ENCODE measurements at regions of chr17 and their contacts with region 1.

Region 1: DNA sequence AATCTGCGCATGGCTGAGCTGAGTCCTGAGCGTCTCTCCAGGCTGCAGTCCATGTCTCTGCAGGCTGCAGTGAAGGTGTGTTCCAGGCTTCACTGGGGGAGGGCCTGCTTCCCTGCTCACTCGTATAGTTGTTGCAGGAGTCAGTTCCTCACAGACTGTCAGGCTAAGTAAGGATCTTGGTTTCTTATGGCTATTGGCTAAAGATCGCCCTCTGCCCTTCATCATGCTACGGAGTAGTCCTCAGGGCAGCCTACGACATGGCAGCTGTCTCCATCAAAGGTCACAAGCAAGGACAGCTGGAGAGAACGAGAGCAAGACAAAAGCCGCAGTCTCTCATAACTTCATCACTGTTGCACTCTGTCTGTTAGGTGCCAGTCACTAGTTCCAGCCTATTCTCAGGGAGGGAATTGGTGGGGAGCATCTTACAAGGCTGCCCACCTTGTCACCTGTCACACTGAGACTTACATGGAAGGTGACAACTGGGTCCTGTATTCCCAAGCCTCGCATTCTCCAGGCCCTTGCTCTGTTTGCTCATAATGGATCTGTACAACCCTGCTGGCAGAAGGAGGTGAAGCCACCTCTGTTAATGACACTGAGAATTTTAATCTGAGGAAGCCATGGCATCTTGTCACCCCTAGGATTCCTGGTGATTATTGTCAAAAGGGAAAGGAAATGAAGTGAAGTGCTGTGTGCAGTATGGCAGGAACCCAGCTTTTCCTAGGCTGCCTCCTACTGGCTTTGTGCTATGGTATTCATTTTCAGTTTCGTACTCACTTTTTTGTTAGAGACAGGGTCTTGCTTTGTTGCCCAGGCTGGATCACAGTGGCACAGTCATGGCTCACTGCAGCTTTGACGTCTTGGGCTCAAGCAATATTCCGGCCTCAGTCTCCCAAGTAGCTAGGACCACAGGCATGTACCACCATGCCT is 43.4 kb downstream of the MFSD11 start:
- DNase-seq: no peak
- H3K4me3 ChIP-seq: no peak overlapping the region
- H3K27ac ChIP-seq: no peak overlapping the region
- H3K4me1 ChIP-seq: no peaks in the 10 kb centered on the region
- H3K27me3 ChIP-seq: no peaks in the 10 kb centered on the region
- CTCF ChIP-seq: peak in 1 of 2 donors; percentile 11

Region 2: GRCh38 chr17:76700617-76701470 is 80.5 kb before region 1 on chr17:
- CTCF ChIA-PET with region 1: interaction called, 11 read pairs
- dilution Hi-C with region 1: no loop called
- in situ Hi-C with region 1: no loop called
- intact Hi-C with region 1: no loop called
- DNase-seq: peak; percentile 82
- H3K4me3 ChIP-seq: peak overlapping the region in 2 of 3 experiments; percentile 27 to 32
- H3K27ac ChIP-seq: peak overlapping the region; percentile 43
- H3K4me1 ChIP-seq: peaks cover 29% of the 10 kb centered on the region
- H3K27me3 ChIP-seq: no peaks in the 10 kb centered on the region
- CTCF ChIP-seq: no peak

Region 3: GRCh38 chr17:76726776-76727718 is 54.3 kb before region 1 on chr17 and contains the start of gene METTL23:
- CTCF ChIA-PET with region 1: no interaction called
- dilution Hi-C with region 1: no loop called
- in situ Hi-C with region 1: no loop called
- intact Hi-C with region 1: no loop called
- DNase-seq: peak; percentile 60
- H3K4me3 ChIP-seq: peak within 1 kb of the TSS; percentile 86 to 97 (median 96)
- H3K27ac ChIP-seq: peak within 1 kb of the TSS; percentile 84
- H3K4me1 ChIP-seq: peaks cover 8% of the 10 kb centered on the region
- H3K27me3 ChIP-seq: no peaks in the 10 kb centered on the region
- CTCF ChIP-seq: peak; percentile 39 to 79
- total RNA-seq, gene METTL23: 18.2 to 27.7 TPM

Measured in mammary epithelial cell (primary cell).